WTC11 (cell line): ENCODE measurements at regions of chr16 and their contacts with region 1.

Region 1: GRCh38 chr16:9258423-9259051 is 167.1 kb downstream of the HAPSTR1 start:
- DNase-seq: peak; percentile 75
- ATAC-seq: peak; percentile 86
- H3K4me3 Mint-ChIP-seq: no peak overlapping the region
- H3K27ac Mint-ChIP-seq: no peak overlapping the region
- H3K4me1 Mint-ChIP-seq: peaks cover 23% of the 10 kb centered on the region
- H3K27me3 Mint-ChIP-seq: no peaks in the 10 kb centered on the region
- CTCF ChIP-seq: peak; percentile 73

Region 2: GRCh38 chr16:9159839-9160550 is 98.5 kb before region 1 on chr16:
- CTCF ChIA-PET with region 1: interaction called, 32 read pairs
- POLR2A ChIA-PET with region 1: no interaction called
- DNase-seq: peak; percentile 87
- ATAC-seq: peak; percentile 87
- H3K4me3 Mint-ChIP-seq: 0 out of 2 replicates have a peak overlapping the region, but pooled peaks have one; percentile 28
- H3K27ac Mint-ChIP-seq: no peak overlapping the region
- H3K4me1 Mint-ChIP-seq: peaks cover 30% of the 10 kb centered on the region
- H3K27me3 Mint-ChIP-seq: no peaks in the 10 kb centered on the region; the same call in 1 of the 2 replicates
- CTCF ChIP-seq: peak; percentile 44

Region 3: GRCh38 chr16:9270424-9270823 is 11.9 kb after region 1 on chr16:
- CTCF ChIA-PET with region 1: interaction called, 14 read pairs
- POLR2A ChIA-PET with region 1: no interaction called
- DNase-seq: no peak
- ATAC-seq: no peak
- H3K4me3 Mint-ChIP-seq: no peak overlapping the region
- H3K27ac Mint-ChIP-seq: no peak overlapping the region
- H3K4me1 Mint-ChIP-seq: peaks cover 5% of the 10 kb centered on the region; the same call in 1 of the 2 replicates
- H3K27me3 Mint-ChIP-seq: no peaks in the 10 kb centered on the region; the same call in 1 of the 2 replicates
- CTCF ChIP-seq: no peak

Region 4: GRCh38 chr16:9297437-9298113 is 39.0 kb after region 1 on chr16:
- CTCF ChIA-PET with region 1: interaction called, 26 read pairs
- POLR2A ChIA-PET with region 1: no interaction called
- DNase-seq: peak; percentile 75
- ATAC-seq: peak; percentile 67
- H3K4me3 Mint-ChIP-seq: no peak overlapping the region
- H3K27ac Mint-ChIP-seq: no peak overlapping the region
- H3K4me1 Mint-ChIP-seq: no peaks in the 10 kb centered on the region
- H3K27me3 Mint-ChIP-seq: no peaks in the 10 kb centered on the region; the same call in 1 of the 2 replicates
- CTCF ChIP-seq: peak; percentile 82

Region 5: GRCh38 chr16:9311303-9311954 is 52.9 kb after region 1 on chr16:
- CTCF ChIA-PET with region 1: interaction called, 14 read pairs
- POLR2A ChIA-PET with region 1: no interaction called
- DNase-seq: peak; percentile 55
- ATAC-seq: peak; percentile 95
- H3K4me3 Mint-ChIP-seq: no peak overlapping the region
- H3K27ac Mint-ChIP-seq: no peak overlapping the region
- H3K4me1 Mint-ChIP-seq: peaks cover 10% of the 10 kb centered on the region
- H3K27me3 Mint-ChIP-seq: peaks cover 10% of the 10 kb centered on the region
- CTCF ChIP-seq: no peak

Region 6: DNA sequence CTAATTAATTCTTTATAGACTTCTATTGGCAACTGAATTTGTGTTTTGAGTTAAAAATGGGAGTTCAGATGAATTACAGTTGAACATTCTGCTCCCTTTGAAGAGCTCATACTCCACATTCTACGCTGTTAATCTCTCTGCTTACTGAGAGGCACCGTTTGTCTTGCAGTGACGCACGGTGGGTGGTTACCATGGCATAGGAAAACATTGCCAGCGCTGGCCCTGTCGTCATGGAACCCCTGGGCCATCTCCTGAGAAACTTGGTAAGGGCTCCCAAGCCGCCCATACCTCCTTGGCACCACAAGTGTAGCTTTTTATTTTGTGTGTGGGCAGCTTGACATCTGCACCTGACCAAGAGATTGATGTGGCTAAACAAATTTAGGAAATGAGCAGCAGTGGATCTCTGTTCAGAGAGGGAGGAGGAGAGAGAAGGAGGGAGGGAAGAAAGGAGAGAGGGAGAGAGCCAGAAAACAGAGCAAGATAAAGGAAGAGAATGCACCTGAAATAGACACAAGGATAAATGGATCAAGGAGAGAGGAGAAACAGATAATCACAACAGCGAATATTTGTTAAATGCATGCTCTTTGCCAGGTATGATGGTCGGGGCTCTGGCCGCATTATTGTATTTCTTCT is 231.4 kb after region 1 on chr16:
- CTCF ChIA-PET with region 1: no interaction called
- POLR2A ChIA-PET with region 1: no interaction called
- DNase-seq: peak; percentile 12
- ATAC-seq: no peak
- H3K4me3 Mint-ChIP-seq: no peak overlapping the region
- H3K27ac Mint-ChIP-seq: no peak overlapping the region
- H3K4me1 Mint-ChIP-seq: no peaks in the 10 kb centered on the region
- H3K27me3 Mint-ChIP-seq: peaks cover 3% of the 10 kb centered on the region; the same call in 1 of the 2 replicates
- CTCF ChIP-seq: no peak

Region 7: DNA sequence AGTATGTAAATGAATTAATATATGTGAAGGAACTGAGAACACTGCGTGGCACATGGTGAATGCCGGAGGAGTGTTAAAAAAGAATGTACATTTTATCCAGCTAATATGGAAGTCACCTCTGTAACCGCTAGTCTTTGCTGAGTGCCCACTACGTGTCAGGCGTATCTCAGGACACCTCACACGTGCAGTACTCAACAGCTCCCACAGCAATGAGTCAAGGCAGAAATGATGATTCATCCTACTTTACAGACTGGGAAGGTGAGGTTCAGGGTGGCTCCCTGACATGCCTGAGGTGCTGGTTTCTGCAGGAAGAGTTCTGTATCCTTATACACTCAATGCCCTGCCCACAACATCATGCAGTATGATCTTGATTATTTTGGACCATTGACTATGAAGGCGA is 319.9 kb after region 1 on chr16:
- CTCF ChIA-PET with region 1: no interaction called
- POLR2A ChIA-PET with region 1: no interaction called
- DNase-seq: no peak
- ATAC-seq: no peak
- H3K4me3 Mint-ChIP-seq: no peak overlapping the region
- H3K27ac Mint-ChIP-seq: no peak overlapping the region
- H3K4me1 Mint-ChIP-seq: peaks cover 4% of the 10 kb centered on the region; the same call in 1 of the 2 replicates
- H3K27me3 Mint-ChIP-seq: peaks cover 2% of the 10 kb centered on the region
- CTCF ChIP-seq: no peak

Region 8: DNA sequence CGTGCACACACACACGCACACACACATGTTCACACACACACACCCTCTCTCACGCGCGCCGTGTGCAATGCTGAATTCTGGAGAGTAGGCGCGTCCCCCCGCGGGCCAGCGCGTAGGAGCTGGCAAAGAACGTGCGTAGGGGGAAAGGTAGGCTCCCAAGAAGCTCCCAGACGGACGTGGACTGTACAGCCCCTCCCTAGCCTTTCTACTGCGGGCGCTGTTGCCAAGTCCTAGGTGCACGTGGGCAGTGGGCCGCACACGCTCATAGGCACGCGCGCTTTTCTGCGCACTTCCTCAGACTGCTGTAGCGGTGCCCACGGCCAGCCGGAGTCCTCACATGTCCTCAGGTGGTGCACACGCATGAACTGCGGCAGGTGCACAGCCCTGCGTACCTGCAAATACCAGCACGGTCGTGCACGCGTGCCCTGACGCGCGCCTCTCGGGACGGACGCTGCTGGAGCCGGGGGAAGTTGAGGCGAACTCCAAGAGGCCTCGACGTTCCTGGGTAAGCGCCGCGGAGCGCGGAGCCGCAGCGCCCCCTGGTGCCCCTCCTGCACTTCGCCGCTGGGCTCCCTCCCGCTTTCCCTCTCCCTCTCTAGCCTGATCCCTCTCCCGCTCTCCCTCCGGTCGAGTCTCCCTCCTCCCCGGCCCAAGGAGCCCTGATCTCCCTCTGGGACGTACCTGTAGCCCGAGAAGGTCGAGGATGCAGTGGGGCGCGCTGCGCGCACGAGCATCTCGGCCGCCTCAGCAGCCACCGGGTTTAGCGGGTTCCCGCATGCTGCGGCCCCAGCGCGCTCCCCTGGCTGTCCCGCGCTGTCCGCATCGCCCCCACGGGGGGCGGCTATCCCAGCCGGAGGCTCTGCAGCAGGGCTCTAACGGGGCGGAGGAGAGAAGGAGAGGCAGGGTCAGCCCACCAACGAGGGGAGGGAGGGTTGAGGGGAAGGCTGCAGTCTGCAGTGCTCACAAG is 922.9 kb after region 1 on chr16:
- CTCF ChIA-PET with region 1: interaction called, 102 read pairs
- POLR2A ChIA-PET with region 1: no interaction called
- DNase-seq: peak; percentile 88
- ATAC-seq: peak; percentile 64
- H3K4me3 Mint-ChIP-seq: peak overlapping the region; percentile 77
- H3K27ac Mint-ChIP-seq: no peak overlapping the region
- H3K4me1 Mint-ChIP-seq: peaks cover 6% of the 10 kb centered on the region; the same call in 1 of the 2 replicates
- H3K27me3 Mint-ChIP-seq: peaks cover 69% of the 10 kb centered on the region
- CTCF ChIP-seq: peak; percentile 94